Mammary epithelial cell (primary cell): ENCODE measurements at regions of chr3 and their contacts with region 1.

Region 1: DNA sequence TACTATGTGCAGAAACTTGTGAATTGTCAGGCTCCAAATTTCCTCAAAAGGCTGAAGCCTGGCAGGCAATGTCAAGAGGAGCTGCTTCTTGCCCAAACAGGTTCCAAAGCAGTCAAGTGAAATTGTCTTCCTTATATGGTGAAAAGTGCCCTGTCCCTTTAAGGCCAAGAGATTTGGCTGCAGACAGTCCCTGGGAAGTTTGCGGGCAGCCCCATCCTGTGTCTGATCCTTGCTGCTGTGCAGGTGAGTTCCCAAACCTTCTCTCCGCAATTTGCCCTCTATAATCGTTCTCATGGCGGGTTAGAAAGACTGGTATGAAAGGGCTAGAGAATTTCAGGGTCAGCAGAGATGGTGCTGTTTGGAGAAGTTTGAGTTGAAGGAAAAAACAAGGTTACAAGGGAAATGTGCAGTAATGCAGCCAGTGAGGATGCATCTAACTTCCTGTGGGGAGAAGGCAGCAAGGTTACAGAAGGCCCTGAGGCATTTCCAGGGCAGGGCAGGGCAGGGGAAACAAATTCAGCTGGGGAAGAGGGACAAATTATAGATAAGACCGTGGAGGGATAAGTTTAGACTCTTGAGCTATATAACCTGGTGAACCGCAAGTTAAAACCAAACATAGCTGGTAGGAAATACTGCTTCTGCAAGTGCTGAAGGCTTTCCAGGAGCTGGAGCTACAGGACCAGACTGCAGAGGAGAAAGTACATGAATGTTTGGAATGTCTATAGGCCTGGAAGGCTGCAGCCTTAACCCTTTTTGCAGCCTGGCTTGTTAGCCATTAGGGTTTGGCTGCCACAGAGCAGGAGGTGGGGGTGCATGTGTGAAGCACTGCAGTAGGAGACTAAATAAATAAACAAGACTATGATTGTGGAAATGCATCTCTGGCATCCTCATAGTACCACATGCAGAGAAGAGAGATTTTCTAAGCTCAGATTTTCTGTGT is 256.2 kb upstream of the IL12A start:
- DNase-seq: peak; percentile 82
- H3K4me3 ChIP-seq: peak overlapping the region; percentile 38 to 52 (median 42)
- H3K27ac ChIP-seq: no peak overlapping the region
- H3K4me1 ChIP-seq: peaks cover 19% of the 10 kb centered on the region
- H3K27me3 ChIP-seq: no peaks in the 10 kb centered on the region
- CTCF ChIP-seq: peak; percentile 16 to 42

Region 2: GRCh38 chr3:159616212-159616825 is 116.1 kb before region 1 on chr3:
- CTCF ChIA-PET with region 1: no interaction called
- dilution Hi-C with region 1: no loop called
- in situ Hi-C with region 1: no loop called
- intact Hi-C with region 1: loop called (anchors 1 kb)
- DNase-seq: peak; percentile 48
- H3K4me3 ChIP-seq: no peak overlapping the region
- H3K27ac ChIP-seq: no peak overlapping the region
- H3K4me1 ChIP-seq: peaks cover 14% of the 10 kb centered on the region
- H3K27me3 ChIP-seq: no peaks in the 10 kb centered on the region
- CTCF ChIP-seq: peak; percentile 49 to 70

Region 3: DNA sequence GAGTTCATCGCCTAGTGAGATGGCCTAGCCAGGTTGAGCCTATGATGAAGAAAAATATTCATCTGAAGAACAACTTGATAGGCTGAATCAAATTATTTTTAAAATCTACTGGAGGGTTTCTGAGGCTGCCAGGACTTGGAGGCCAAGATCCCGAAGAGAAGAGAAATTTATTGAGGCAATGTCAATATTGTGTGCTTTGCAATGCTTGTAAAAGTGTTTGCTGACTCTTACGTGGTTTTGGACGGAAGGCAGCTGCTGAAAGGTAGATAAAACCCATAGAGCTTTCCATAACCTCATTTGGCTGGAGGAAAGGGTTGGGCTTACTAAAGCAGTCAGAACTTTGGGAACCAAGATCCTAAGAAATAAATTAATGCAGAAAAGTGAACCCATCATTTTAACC is 104.8 kb before region 1 on chr3:
- CTCF ChIA-PET with region 1: no interaction called
- dilution Hi-C with region 1: loop called (anchors 5 kb)
- in situ Hi-C with region 1: no loop called
- intact Hi-C with region 1: no loop called
- DNase-seq: no peak
- H3K4me3 ChIP-seq: no peak overlapping the region
- H3K27ac ChIP-seq: no peak overlapping the region
- H3K4me1 ChIP-seq: peaks cover 10% of the 10 kb centered on the region
- H3K27me3 ChIP-seq: no peaks in the 10 kb centered on the region
- CTCF ChIP-seq: no peak